Endothelial cell of umbilical vein (primary cell): ENCODE measurements at regions of chr11 and their contacts with region 1.

Region 1: GRCh38 chr11:82906244-82906654 is 4.7 kb downstream of the DDIAS start:
- DNase-seq: peak; percentile 68
- H3K4me3 ChIP-seq: no peak overlapping the region
- H3K27ac ChIP-seq: no peak overlapping the region
- H3K4me1 ChIP-seq: peaks cover 20% of the 10 kb centered on the region
- H3K27me3 ChIP-seq: no peaks in the 10 kb centered on the region
- CTCF ChIP-seq: peak; percentile 12 to 25
- POLR2A ChIP-seq: no peak

Region 2: DNA sequence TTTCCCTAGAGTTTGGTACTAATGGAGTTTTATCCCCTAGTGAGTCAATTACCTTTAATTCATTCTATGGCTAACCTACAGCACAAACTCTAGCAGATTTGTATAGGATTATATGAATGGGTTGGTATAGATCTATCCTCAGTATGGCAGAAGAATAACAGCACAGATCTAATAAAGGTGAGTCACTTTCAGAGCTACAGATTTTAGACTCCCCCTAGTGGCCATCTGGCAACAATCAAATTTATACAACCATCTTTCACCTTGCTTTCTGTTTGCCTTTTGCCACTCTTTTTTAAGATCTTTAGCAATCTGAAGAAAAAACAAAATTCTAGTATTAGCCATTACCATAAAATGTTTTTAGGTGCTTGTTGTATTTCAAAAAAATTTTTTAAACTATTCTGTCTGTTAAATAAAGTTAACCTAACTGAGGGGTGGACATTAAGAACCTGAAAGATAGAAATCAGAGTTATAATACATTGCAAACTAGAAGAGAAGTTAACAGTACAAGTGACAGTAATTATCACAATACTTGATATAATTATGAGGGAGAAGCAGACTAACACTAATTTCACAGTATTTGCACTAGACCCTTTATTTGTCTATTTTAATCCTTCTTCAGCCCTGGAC is 21.1 kb after region 1 on chr11:
- CTCF ChIA-PET with region 1: interaction called, 12 read pairs
- POLR2A ChIA-PET with region 1: no interaction called
- dilution Hi-C with region 1: no loop called
- intact Hi-C with region 1: loop called (anchors 1 kb)
- DNase-seq: peak; percentile 59
- H3K4me3 ChIP-seq: no peak overlapping the region
- H3K27ac ChIP-seq: no peak overlapping the region
- H3K4me1 ChIP-seq: peaks cover 16% of the 10 kb centered on the region
- H3K27me3 ChIP-seq: no peaks in the 10 kb centered on the region
- CTCF ChIP-seq: peak; percentile 59 to 61
- POLR2A ChIP-seq: no peak

Region 3: GRCh38 chr11:83071567-83072349 is 165.5 kb after region 1 on chr11 and contains the start of gene RAB30:
- CTCF ChIA-PET with region 1: no interaction called
- POLR2A ChIA-PET with region 1: no interaction called
- dilution Hi-C with region 1: no loop called
- intact Hi-C with region 1: loop called (anchors 1 kb)
- DNase-seq: peak; percentile 100
- H3K4me3 ChIP-seq: peak within 1 kb of the TSS; percentile 78 to 96 (median 93)
- H3K27ac ChIP-seq: peak within 1 kb of the TSS; percentile 75
- H3K4me1 ChIP-seq: peaks cover 36% of the 10 kb centered on the region
- H3K27me3 ChIP-seq: no peaks in the 10 kb centered on the region
- CTCF ChIP-seq: no peak
- POLR2A ChIP-seq: peak; percentile 97
- total RNA-seq, gene RAB30: 14.6 and 18.4 TPM in 2 replicates

Region 4: GRCh38 chr11:83193315-83194280 is 287.3 kb after region 1 on chr11 and contains the start of gene ANKRD42:
- CTCF ChIA-PET with region 1: interaction called, 4 read pairs
- POLR2A ChIA-PET with region 1: interaction called, 4 read pairs
- dilution Hi-C with region 1: no loop called
- intact Hi-C with region 1: loop called (anchors 1 kb)
- DNase-seq: peak; percentile 96
- H3K4me3 ChIP-seq: peak within 1 kb of the TSS; percentile 31 to 87 (median 83)
- H3K27ac ChIP-seq: peak within 1 kb of the TSS; percentile 72
- H3K4me1 ChIP-seq: peaks cover 17% of the 10 kb centered on the region
- H3K27me3 ChIP-seq: no peaks in the 10 kb centered on the region
- CTCF ChIP-seq: no peak
- POLR2A ChIP-seq: peak; percentile 92
- total RNA-seq, gene ANKRD42: 6.6 and 7.6 TPM in 2 replicates

Region 5: GRCh38 chr11:83724008-83724461 is 817.8 kb after region 1 on chr11:
- CTCF ChIA-PET with region 1: no interaction called
- POLR2A ChIA-PET with region 1: no interaction called
- dilution Hi-C with region 1: no loop called
- intact Hi-C with region 1: loop called (anchors 2 kb)
- DNase-seq: peak; percentile 65
- H3K4me3 ChIP-seq: peak overlapping the region in 2 of 3 experiments; percentile 23 to 34
- H3K27ac ChIP-seq: no peak overlapping the region
- H3K4me1 ChIP-seq: no peaks in the 10 kb centered on the region
- H3K27me3 ChIP-seq: peaks cover 12 to 17% of the 10 kb centered on the region in 2 experiments
- CTCF ChIP-seq: no peak
- POLR2A ChIP-seq: no peak